Heart left ventricle (tissue), 16 donors: ENCODE measurements at regions of chr2 and their contacts with region 1.

Region 1: DNA sequence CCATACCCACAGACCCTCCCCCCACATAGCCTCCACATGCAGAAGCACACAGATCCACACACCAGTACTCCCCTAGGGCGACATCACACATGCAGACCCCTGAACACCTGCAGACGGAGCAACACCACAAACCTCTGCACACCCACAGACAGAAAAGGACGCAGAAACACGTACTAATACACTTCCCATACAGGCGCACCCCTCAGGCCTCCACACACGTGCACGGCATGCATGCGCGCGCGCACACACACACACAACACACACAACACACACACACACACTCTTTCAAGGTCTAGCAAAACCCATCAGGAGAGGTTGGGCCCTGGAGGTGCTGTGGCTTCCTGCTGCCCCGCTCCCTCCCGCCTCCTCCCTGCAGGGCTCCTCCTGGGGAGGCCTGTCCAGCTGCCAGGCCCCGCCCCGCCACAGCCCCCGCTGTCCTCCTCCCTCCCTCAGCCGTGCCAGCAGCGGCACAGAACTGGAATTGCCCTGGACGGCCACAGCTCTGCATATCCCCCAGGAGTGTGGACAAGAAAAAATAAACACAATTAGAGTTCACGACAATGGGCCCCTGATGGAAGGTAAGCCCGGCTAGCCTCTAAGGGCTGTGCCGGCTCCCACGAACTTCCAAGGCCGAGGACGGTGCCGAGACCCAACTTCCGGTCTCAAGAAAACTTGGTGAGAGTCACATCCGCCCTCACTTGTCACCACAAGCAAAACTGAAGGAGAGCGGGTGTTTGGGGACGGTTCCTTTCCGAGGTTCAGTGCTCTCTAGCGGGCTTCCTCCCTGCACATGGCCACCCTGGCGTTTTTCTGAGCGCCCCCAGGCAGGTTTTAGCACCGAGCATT is 6.8 kb downstream of the ZFP36L2 start:
- DNase-seq: peak; percentile 91 to 95 (median 93)
- ATAC-seq: peak; percentile 66 to 86 (median 80)
- H3K4me3 ChIP-seq: peak overlapping the region; percentile 11 to 97 (median 80)
- H3K27ac ChIP-seq: peak overlapping the region; percentile 96 to 99 (median 99)
- H3K4me1 ChIP-seq: peaks cover 6 to 83% (median 61%) of the 10 kb centered on the region in 12 donors
- H3K27me3 ChIP-seq: no peaks in the 10 kb centered on the region
- CTCF ChIP-seq: peak in 3 of 12 donors; percentile 18 to 30 (median 25)
- POLR2A ChIP-seq: peak in 1 of 2 donors; percentile 43

Region 2: DNA sequence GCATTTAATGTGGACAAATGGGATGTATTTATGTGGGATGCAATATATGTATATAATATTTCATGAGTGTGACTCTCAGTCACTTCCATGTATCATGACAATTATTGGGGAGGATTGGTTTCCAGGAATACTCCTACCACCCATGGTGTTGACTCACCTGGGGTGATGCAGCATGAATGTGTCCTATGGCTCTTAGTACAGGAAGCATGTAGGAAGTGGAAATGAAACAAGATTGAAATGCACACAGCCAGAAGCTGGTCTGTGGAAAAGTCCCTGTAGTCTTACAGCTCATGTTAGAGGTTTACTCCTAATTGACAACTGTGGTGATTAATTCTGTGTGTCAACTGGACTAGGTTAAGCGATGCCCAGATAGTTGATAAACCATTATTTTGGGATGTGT is 337.9 kb before region 1 on chr2:
- intact Hi-C with region 1: no loop called
- DNase-seq: no peak
- ATAC-seq: no peak
- H3K4me3 ChIP-seq: no peak overlapping the region
- H3K27ac ChIP-seq: peak overlapping the region in 8 of 12 donors; percentile 23 to 93 (median 84)
- H3K4me1 ChIP-seq: peaks cover 0 to 54% (median 43%) of the 10 kb centered on the region in 12 donors
- H3K27me3 ChIP-seq: no peaks in the 10 kb centered on the region
- CTCF ChIP-seq: no peak
- POLR2A ChIP-seq: no peak

Region 3: DNA sequence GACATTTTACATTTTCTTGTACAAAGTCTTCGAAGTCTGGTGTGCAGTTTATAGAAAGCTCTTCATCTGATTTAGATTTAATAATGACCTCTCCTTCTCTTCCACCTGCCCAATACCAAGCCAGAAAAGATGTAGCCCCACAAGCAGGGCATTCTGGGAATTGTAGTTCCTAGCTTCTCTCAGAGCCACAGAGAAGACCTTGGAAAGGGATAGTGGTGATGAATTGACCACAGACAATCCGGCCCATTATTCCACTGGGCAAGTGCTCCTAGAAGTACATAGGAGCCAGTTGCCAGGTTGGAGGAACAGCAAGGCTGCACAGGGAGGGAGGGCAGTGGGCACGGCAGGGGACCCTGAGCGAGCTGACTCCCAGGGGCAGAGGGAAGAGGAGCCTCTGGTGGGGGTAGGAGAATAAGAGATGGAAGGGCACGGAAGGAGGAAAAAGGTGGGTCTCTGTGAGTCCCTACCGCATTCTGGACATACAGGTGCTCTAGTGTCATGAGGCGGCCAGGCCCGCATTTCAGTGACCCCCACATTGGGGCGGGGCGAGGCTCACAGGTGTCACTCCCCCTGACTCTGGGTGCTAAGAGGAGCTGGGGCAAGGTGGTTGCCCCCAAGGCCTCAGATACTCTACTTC is 274.7 kb before region 1 on chr2:
- intact Hi-C with region 1: loop called in 2 of 10 experiments (anchors 2 to 5 kb)
- DNase-seq: no peak
- ATAC-seq: no peak
- H3K4me3 ChIP-seq: no peak overlapping the region
- H3K27ac ChIP-seq: peak overlapping the region in 1 of 12 donors; percentile 6
- H3K4me1 ChIP-seq: peaks cover 0 to 32% (median 16%) of the 10 kb centered on the region in 12 donors
- H3K27me3 ChIP-seq: no peaks in the 10 kb centered on the region
- CTCF ChIP-seq: no peak
- POLR2A ChIP-seq: no peak

Region 4: GRCh38 chr2:43024515-43025011 is 195.0 kb before region 1 on chr2:
- intact Hi-C with region 1: loop called in 2 of 10 experiments (anchors 1 to 2 kb)
- DNase-seq: peak; percentile 68 to 81 (median 77)
- ATAC-seq: peak in 3 of 4 donors; percentile 78 to 82 (median 78)
- H3K4me3 ChIP-seq: no peak overlapping the region
- H3K27ac ChIP-seq: peak overlapping the region in 1 of 12 donors; percentile 39
- H3K4me1 ChIP-seq: peaks cover 0 to 37% (median 27%) of the 10 kb centered on the region in 12 donors
- H3K27me3 ChIP-seq: no peaks in the 10 kb centered on the region
- CTCF ChIP-seq: peak; percentile 69 to 96 (median 82)
- POLR2A ChIP-seq: no peak

Region 5: DNA sequence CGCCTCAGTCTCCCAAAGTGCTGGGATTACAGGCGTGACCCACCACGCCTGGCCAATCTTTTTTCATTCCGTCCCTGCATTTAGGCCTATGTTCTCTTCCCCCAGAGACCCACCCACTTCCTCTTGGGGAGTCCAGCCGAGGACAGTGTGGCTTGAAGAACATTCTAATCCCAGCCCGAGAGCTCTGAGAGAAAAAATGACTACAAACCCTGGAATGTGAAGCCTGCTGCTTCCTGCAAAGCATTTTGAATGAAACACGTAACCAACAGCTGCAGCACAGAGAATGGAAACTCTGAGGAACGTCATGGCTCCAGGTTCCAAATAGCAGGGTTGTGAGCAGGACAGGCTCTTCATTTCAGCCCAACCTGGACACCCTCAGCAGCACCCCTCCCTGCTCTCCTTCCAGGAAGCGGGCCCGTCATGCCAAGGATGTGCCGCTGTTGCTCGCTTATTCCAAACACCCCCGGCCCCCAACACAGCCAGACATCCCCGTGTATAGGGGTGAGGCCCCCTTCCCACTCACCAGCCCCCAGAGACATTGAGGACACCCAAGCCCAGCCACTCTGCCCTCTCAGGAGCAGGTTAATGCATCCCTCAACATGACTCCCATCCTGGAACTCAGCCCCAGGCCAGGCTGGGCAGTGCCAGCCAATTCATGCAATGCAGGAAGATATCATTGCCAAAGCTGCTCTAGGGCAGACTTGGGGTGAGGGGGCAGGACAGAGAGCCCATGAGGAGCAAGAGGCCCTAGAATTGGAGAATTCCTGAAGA is 133.0 kb before region 1 on chr2:
- intact Hi-C with region 1: loop called in 1 of 10 experiments (anchors 5 kb)
- DNase-seq: peak; percentile 71 to 88 (median 84)
- ATAC-seq: peak; percentile 85 to 89 (median 88)
- H3K4me3 ChIP-seq: no peak overlapping the region
- H3K27ac ChIP-seq: peak overlapping the region; percentile 74 to 96 (median 89)
- H3K4me1 ChIP-seq: peaks cover 12 to 60% (median 56%) of the 10 kb centered on the region in 12 donors
- H3K27me3 ChIP-seq: no peaks in the 10 kb centered on the region
- CTCF ChIP-seq: no peak
- POLR2A ChIP-seq: no peak

Region 6: DNA sequence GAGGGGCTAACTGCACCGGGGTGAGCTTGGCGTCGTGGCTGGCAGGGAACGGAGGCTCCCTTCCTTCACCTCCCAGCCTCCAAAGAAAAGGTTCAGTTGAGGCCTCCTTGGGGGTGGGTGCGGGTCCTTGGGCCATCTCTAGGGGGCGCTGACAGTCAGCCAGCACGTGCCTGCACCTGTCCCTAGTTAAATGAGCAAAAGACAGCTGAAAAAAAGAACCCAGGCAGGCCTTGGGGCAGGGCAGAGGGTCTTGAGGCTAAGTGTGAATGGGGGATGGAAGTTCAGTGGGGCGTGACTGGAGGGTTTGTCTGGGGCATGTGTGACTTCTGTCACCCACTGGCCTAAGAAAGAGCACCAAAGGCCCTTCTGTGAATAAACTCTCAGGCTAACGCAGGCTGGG is 49.6 kb before region 1 on chr2:
- intact Hi-C with region 1: loop called in 7 of 10 experiments (anchors 5 to 10 kb)
- DNase-seq: peak in 1 of 5 donors; percentile 69
- ATAC-seq: no peak
- H3K4me3 ChIP-seq: no peak overlapping the region
- H3K27ac ChIP-seq: peak overlapping the region in 5 of 12 donors; percentile 34 to 85 (median 67)
- H3K4me1 ChIP-seq: peaks cover 0 to 73% (median 31%) of the 10 kb centered on the region in 12 donors
- H3K27me3 ChIP-seq: no peaks in the 10 kb centered on the region
- CTCF ChIP-seq: peak; percentile 15 to 54 (median 38)
- POLR2A ChIP-seq: no peak

Region 7: DNA sequence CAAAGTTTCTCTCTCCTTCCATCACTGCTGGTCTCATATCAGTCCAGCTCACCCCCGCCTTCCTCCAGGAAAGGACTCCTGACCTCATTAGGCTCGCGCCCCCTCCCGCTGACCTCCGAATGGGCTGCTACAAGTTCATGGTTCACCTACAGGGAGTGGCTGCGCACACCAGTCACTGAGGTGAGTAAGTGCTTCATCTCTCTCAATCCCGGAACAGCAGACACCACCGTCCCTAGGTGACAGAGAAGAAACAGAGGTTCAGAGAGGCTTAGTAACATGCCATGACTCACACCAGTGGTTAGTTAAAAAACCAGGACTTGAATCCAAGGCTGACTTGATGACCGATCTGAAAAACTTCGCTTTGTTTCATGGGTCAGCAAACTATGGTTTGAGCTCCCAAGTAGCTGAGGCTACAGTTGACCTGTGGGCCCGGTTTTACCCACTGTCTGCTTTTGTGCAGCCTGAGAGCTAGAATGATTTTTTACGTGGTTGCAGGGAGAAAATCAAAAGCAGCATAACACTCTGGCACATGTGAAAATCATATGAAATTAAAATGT is 35.2 kb before region 1 on chr2:
- intact Hi-C with region 1: loop called in 6 of 10 experiments (anchors 5 kb)
- DNase-seq: no peak
- ATAC-seq: no peak
- H3K4me3 ChIP-seq: no peak overlapping the region
- H3K27ac ChIP-seq: peak overlapping the region in 1 of 12 donors; percentile 29
- H3K4me1 ChIP-seq: peaks cover 0 to 26% (median 2%) of the 10 kb centered on the region in 12 donors
- H3K27me3 ChIP-seq: no peaks in the 10 kb centered on the region
- CTCF ChIP-seq: no peak
- POLR2A ChIP-seq: no peak